ENCODE measurements at regions of chr22 and their contacts with region 1.

Region 1: GRCh38 chr22:42079319-42080251 is at the start of gene SMDT1:
- DNase-seq: peak; percentile 100
- ATAC-seq: peak; percentile 96
- H3K4me3 ChIP-seq: peak within 1 kb of the TSS; percentile 66 to 89
- H3K27ac ChIP-seq: peak within 1 kb of the TSS; percentile 91 to 98
- H3K4me1 ChIP-seq: no peaks in the 10 kb centered on the region
- H3K27me3 ChIP-seq: no peaks in the 10 kb centered on the region
- total RNA-seq, gene SMDT1: 62.9 to 71.3 TPM

Region 2: DNA sequence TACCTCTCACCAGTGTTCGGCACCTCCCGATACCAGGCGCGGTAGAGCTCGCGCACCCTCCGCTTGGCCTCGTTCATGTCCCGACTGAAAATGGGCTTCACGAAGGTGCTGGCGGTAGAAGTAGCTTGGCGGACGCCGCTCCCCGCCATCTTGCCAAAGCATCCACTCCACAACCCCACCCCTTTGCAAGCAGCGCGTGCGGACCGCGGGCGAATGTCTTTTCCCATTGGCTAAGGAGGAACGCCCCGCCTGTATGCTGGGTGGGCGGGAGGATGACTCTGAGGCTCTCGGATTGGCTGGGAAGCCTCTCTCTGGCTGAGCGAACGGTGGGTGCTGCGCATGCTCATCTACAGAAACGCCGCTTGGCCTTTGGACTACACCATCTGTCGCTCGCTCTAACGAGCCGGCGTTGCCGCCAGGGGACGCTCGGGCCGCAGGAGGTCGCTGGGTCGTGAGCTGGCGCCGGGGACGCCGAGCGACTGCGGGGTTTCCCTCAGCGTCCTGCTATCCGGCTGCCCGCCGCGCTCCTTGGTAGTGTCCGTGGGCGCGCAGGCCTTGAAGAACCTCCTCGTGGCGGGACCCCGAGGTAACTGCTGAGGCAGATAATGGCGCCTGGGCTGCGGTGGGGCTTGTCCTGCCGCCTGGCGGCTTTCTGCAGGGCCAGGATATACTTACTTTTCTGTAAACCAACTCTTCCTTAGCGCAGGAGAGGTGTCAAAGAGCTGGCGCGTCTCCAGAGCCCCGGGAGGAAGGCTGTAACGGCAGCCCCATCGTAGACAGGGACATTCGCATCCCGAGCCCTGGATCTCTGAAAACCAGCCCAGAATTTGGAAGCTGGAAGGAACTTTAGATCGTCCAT is 11.2 kb after region 1 on chr22 and contains the start of gene NDUFA6:
- intact Hi-C with region 1: loop called in 1 of 2 experiments (anchors 1 kb)
- DNase-seq: peak; percentile 99
- ATAC-seq: peak; percentile 98
- H3K4me3 ChIP-seq: peak within 1 kb of the TSS; percentile 74 to 90
- H3K27ac ChIP-seq: peak within 1 kb of the TSS; percentile 54 to 94
- H3K4me1 ChIP-seq: peaks cover 0 to 3% of the 10 kb centered on the region in 2 donors
- H3K27me3 ChIP-seq: no peaks in the 10 kb centered on the region
- total RNA-seq, gene NDUFA6: 30.6 to 34.1 TPM

Region 3: GRCh38 chr22:42343551-42344081 is 264.0 kb after region 1 on chr22:
- intact Hi-C with region 1: loop called in 1 of 2 experiments (anchors 10 kb)
- DNase-seq: no peak
- ATAC-seq: no peak
- H3K4me3 ChIP-seq: peak overlapping the region; percentile 32 to 44
- H3K27ac ChIP-seq: no peak overlapping the region
- H3K4me1 ChIP-seq: no peaks in the 10 kb centered on the region
- H3K27me3 ChIP-seq: no peaks in the 10 kb centered on the region